Caco-2 (cell line): ENCODE measurements at regions of chr3 and their contacts with region 1.

Region 1: DNA sequence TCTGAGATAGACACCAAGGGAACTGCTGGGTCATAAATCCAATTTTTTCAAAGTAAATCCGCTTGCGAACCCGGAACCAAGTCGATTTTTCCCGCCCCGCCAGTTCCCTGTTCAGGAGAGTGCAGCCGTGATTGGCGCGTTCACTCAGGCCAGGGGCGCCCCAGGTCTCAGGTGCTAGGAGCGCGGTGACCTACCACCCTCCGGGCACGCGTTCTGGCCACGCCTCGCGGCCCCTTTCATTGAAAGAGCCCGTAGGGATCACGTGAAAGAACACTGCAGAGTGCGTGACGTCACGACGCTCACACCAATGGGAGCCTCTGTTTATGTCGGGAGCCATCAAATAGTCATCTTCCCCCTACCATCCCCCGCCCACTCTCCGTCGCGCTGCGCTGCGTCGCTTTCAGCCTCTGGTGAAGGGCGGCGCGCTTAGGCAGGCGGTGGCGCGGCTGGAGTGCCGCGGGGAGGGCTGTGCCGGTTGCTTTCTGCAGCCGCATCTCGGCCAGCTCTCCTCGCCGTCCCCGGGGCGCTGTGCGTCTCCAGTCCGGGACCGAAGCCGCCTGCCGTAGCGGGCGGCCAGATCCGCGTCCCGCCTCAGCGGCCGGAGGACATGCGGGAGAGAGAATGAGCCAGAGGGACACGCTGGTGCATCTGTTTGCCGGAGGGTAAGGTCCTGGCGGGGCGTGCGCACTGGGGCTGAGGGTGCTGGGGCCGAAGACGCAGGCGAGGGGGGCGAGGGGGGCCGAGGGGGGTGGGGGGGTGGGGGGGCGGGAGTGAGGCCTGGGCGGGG is at the start of gene SLC25A36:
- DNase-seq: peak; percentile 98
- H3K4me3 ChIP-seq: peak within 1 kb of the TSS; percentile 94
- H3K4me3 Mint-ChIP-seq: peak within 1 kb of the TSS; percentile 89
- H3K27ac Mint-ChIP-seq: peak within 1 kb of the TSS; percentile 97
- H3K4me1 ChIP-seq: peaks cover 30% of the 10 kb centered on the region
- H3K4me1 Mint-ChIP-seq: peaks cover 9% of the 10 kb centered on the region
- H3K27me3 ChIP-seq: no peaks in the 10 kb centered on the region
- H3K27me3 Mint-ChIP-seq: no peaks in the 10 kb centered on the region
- CTCF ChIP-seq: no peak
- total RNA-seq, gene SLC25A36: 150 and 167 TPM in 2 replicates

Region 2: DNA sequence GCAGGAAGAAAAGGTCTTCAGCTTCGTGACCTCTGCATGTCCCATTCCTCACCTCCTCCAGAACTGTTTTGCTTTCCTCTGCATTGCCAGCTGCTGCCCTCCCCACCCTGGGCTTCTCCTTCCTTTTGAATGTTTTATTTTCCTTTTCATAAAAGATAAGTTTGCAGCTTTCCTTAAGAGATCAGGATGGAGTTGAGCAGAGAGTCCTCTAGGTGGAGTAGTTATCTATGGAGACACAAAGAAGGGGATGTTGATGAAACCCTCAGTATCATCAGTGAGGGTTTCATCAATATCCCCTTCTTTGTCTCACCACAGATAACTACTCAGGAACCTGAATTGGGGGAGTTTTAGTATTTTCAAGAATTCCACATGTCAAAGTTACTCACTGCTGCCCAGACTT is 19.0 kb before region 1 on chr3:
- CTCF ChIA-PET with region 1: interaction called, 7 read pairs
- POLR2A ChIA-PET with region 1: no interaction called
- intact Hi-C with region 1: loop called (anchors 1 kb)
- DNase-seq: peak in 1 of 2 experiments; percentile 41
- H3K4me3 ChIP-seq: no peak overlapping the region
- H3K4me3 Mint-ChIP-seq: no peak overlapping the region
- H3K27ac Mint-ChIP-seq: no peak overlapping the region
- H3K4me1 ChIP-seq: peaks cover 8% of the 10 kb centered on the region
- H3K4me1 Mint-ChIP-seq: peaks cover 29% of the 10 kb centered on the region
- H3K27me3 ChIP-seq: no peaks in the 10 kb centered on the region
- H3K27me3 Mint-ChIP-seq: no peaks in the 10 kb centered on the region
- CTCF ChIP-seq: peak; percentile 27 to 54

Region 3: DNA sequence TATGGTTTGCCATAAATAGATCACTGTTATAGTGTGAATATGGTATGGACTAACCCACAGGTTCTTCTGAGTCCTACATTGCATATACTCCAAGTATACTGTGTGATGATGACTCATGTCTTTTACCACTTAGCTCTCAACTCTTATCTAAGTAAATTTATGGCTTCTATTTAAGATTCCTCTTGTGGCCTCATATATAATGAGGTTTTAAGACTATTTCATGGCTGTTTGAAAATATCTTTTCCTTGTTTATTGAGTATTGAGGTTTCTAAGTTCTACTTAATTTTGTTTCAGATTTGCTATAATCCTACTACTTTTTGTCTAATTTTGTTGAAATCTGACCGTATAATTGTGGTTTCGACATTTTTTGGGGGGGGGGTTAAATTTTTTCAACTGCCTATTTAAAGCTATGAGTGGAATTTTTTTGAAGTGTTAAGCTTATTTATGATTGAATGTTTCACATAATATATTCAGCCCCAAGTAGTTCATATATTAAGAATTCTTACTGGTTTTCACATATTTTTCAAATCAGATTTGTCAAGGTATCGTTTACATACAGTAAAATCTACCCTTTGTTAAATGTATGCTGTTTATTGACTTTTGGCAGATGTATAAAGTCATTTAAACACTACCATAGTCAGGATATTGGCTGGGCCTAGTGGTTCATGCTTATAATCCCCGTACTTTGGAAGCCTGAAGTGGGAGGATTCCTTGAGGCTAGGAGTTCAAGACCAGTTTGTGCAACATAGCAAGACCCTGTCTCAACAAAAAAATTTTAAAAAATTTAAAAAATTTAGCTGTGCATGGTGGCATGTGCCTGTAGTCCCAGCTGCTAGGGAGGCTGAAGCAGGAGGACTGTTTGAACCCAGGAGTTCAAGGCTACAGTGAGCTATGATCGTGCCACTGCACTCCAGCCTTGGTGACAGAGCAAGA is 11.7 kb after region 1 on chr3:
- CTCF ChIA-PET with region 1: no interaction called
- POLR2A ChIA-PET with region 1: interaction called, 22 read pairs
- intact Hi-C with region 1: loop called (anchors 1 kb)
- DNase-seq: no peak
- H3K4me3 ChIP-seq: no peak overlapping the region
- H3K4me3 Mint-ChIP-seq: peak overlapping the region; percentile 13
- H3K27ac Mint-ChIP-seq: peak overlapping the region; percentile 15
- H3K4me1 ChIP-seq: peaks cover 97% of the 10 kb centered on the region
- H3K4me1 Mint-ChIP-seq: peaks cover 72% of the 10 kb centered on the region
- H3K27me3 ChIP-seq: no peaks in the 10 kb centered on the region
- H3K27me3 Mint-ChIP-seq: no peaks in the 10 kb centered on the region
- CTCF ChIP-seq: no peak

Region 4: GRCh38 chr3:140972833-140973232 is 31.2 kb after region 1 on chr3:
- CTCF ChIA-PET with region 1: no interaction called
- POLR2A ChIA-PET with region 1: no interaction called
- intact Hi-C with region 1: loop called (anchors 2 kb)
- DNase-seq: no peak
- H3K4me3 ChIP-seq: no peak overlapping the region
- H3K4me3 Mint-ChIP-seq: no peak overlapping the region
- H3K27ac Mint-ChIP-seq: no peak overlapping the region
- H3K4me1 ChIP-seq: no peaks in the 10 kb centered on the region
- H3K4me1 Mint-ChIP-seq: no peaks in the 10 kb centered on the region
- H3K27me3 ChIP-seq: no peaks in the 10 kb centered on the region
- H3K27me3 Mint-ChIP-seq: no peaks in the 10 kb centered on the region
- CTCF ChIP-seq: peak; percentile 27 to 36